Pancreas (tissue), 10 donors: ENCODE measurements at regions of chr16 and their contacts with region 1.

Region 1: DNA sequence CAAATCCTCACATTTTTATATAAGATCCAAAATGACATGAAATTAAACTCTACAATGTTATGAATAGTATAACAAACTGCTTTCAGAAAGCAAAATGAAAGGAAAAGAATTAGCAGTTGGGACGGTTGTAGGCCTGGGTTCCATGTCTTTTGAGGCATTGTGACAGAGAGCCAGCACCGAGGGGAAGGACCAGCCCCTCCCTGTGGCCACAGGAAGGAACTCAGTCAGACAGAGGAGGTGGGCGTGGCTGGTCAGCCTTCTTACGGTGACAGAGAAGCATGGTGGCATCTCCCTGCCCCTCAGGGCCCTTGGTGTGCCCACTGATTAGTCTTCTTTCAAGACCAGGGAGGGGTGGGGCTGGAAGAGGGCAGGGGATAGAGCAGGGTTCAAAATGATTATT is 5.7 kb downstream of the ZNF319 start:
- DNase-seq: peak in 2 of 6 donors; percentile 41 to 44
- ATAC-seq: peak in 2 of 4 donors; percentile 25 to 43
- H3K4me3 ChIP-seq: no peak overlapping the region
- H3K27ac ChIP-seq: no peak overlapping the region
- H3K4me1 ChIP-seq: peaks cover 10 to 27% (median 19%) of the 10 kb centered on the region in 3 donors
- H3K27me3 ChIP-seq: no peaks in the 10 kb centered on the region
- CTCF ChIP-seq: no peak

Region 2: DNA sequence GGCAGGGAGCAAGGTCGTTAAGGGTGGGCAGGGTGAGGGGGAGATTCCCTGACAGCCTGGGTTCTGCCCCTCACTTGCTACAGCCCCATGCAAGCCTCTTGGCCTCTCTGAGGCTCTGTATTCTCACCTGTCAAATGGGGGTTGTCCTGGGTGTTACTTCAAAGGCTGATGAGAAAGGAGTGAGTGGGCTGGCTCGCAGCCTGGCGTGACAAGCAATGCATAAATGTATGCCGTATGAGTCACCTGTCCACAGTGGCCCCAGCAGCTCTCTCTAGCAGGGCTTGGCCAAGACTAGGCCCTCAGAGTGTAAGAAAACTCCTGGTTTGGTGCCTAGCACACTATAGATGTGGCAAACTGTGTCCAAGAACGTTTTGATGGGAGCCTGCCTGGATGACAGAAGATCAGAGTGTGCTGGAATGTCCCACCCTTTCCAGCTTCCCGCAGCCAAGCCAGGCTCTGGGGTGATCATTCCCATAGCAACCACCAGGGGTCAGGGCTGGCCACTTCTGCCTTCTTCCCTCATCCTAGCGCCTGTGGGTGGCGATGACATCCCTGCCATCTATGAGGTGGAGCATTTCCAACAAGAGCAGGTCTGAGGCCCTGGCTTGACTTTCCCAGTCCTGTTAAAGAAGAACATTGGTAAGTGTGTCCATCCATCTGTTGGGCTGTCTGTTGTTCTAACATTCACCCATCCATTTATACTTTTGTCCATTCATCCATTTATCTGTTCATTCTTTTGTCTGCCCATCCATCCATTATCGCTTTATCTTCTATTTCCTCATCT is 403.5 kb before region 1 on chr16:
- intact Hi-C with region 1: loop called in 1 of 3 experiments (anchors 10 kb)
- DNase-seq: peak; percentile 59 to 84 (median 78)
- ATAC-seq: peak; percentile 95 to 98 (median 96)
- H3K4me3 ChIP-seq: no peak overlapping the region
- H3K27ac ChIP-seq: no peak overlapping the region
- H3K4me1 ChIP-seq: no peaks in the 10 kb centered on the region
- H3K27me3 ChIP-seq: no peaks in the 10 kb centered on the region
- CTCF ChIP-seq: peak; percentile 71 to 92 (median 83)

Region 3: GRCh38 chr16:57757326-57757786 is 237.4 kb before region 1 on chr16:
- intact Hi-C with region 1: loop called in 1 of 3 experiments (anchors 5 kb)
- DNase-seq: peak; percentile 77 to 99 (median 92)
- ATAC-seq: peak; percentile 88 to 95 (median 93)
- H3K4me3 ChIP-seq: no peak overlapping the region
- H3K27ac ChIP-seq: peak overlapping the region in 1 of 4 donors; percentile 28
- H3K4me1 ChIP-seq: no peaks in the 10 kb centered on the region
- H3K27me3 ChIP-seq: no peaks in the 10 kb centered on the region
- CTCF ChIP-seq: peak; percentile 95 to 100 (median 98)

Region 4: GRCh38 chr16:58198022-58198683 is 203.4 kb after region 1 on chr16 and contains the start of gene CSNK2A2:
- intact Hi-C with region 1: no loop called
- DNase-seq: peak; percentile 64 to 90 (median 74)
- ATAC-seq: peak; percentile 95 to 99 (median 98)
- H3K4me3 ChIP-seq: peak within 1 kb of the TSS; percentile 56 to 85 (median 77)
- H3K27ac ChIP-seq: no peak within 1 kb of the TSS
- H3K4me1 ChIP-seq: peaks cover 0 to 8% (median 0%) of the 10 kb centered on the region in 3 donors
- H3K27me3 ChIP-seq: no peaks in the 10 kb centered on the region
- CTCF ChIP-seq: no peak
- total RNA-seq, gene CSNK2A2: 35.5 to 59.0 (median 40.6) TPM